ENCODE measurements at regions of chr5 and their contacts with region 1.

Region 1: GRCh38 chr5:145825751-145826180 is 9.4 kb downstream of the PRELID2 start:
- DNase-seq: peak in 1 of 2 experiments; percentile 40
- H3K4me3 ChIP-seq: no peak overlapping the region
- H3K27ac ChIP-seq: no peak overlapping the region
- H3K4me1 ChIP-seq: peaks cover 11% of the 10 kb centered on the region
- H3K27me3 ChIP-seq: no peaks in the 10 kb centered on the region
- CTCF ChIP-seq: peak; percentile 88

Region 2: DNA sequence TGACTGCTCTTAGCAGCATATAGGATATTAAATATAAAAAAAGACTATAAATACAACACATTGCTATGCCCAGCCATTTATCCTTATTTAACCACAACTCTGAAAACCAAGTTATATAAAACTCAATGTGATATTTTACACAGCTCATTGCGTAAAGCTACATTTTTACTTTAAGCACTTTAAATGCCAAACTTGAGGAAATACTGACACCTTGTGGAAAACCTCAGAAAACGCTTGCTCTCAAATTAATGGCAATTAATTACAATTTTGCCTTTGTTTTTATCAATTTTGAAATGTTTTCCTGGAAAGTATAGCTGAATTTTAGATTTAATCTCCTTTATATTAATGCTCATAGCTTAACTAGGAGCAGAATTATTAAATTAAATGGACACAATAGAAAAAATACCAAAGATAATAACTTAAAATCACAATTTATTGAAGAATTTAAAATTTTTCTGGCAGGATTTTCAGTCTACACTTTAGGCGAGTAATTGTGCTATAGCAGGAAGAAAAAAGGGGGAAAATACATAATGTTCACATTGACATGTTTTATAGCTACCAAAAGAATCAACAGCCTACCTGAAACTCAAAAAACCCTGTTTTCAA is 304.8 kb after region 1 on chr5:
- CTCF ChIA-PET with region 1: no interaction called
- POLR2A ChIA-PET with region 1: no interaction called
- intact Hi-C with region 1: loop called (anchors 5 kb)
- DNase-seq: no peak
- H3K4me3 ChIP-seq: no peak overlapping the region
- H3K27ac ChIP-seq: no peak overlapping the region
- H3K4me1 ChIP-seq: no peaks in the 10 kb centered on the region
- H3K27me3 ChIP-seq: no peaks in the 10 kb centered on the region
- CTCF ChIP-seq: peak; percentile 85

Measured in PC-9 (cell line).